ENCODE measurements at regions of chr1 and their contacts with region 1.

Region 1: GRCh38 chr1:234925440-234926263 is 203.0 kb downstream of the TOMM20 start:
- DNase-seq: no peak
- ATAC-seq: peak; percentile 62 to 87

Region 2: DNA sequence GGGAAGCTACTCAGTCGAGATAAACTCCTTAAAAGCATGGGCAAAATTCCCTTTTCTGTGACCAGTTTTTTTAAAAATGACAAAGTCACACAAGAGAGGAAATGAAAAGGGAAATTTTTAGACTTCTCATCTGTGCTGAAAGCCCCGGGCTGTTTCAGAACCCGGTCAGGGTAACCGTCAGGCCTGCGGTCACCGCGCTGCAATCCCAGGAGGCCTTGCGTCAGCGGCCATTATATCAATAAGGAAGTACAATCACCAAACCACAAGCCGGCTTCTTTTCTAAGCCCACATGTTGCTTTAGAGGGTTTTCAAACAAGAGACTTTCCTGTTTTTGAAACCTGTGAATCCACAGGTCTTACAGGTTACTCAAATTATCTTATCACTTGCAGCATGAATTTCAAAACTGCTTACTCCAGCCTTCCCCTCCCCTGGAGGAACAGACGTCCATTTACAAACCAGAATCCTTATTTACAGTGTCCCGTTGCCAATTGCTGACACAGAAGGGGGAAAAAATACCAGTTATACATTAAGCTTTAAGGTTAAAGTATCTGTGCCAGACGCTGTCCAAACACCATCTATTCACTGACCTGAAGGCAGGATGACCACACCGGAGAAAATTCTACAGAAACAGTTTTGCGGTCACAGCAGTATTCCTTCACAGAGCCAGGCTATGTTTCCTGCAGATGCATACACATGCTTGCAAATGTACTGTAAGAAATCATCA is 37.7 kb after region 1 on chr1:
- intact Hi-C with region 1: loop called in 1 of 2 experiments (anchors 5 kb)
- DNase-seq: peak; percentile 88
- ATAC-seq: peak; percentile 72 to 74

Measured in left cardiac atrium (tissue), 4 donors.